A549 (cell line): ENCODE measurements at regions of chr7 and their contacts with region 1.

Region 1: GRCh38 chr7:116525913-116526861 is 1.4 kb downstream of the CAV1 start:
- DNase-seq: peak; percentile 83 to 90
- ATAC-seq: peak; percentile 72 to 82
- H3K4me3 ChIP-seq: peak overlapping the region; percentile 78
- H3K27ac ChIP-seq: peak overlapping the region; percentile 99
- H3K4me1 ChIP-seq: peaks cover 68% of the 10 kb centered on the region
- CTCF ChIP-seq: peak; percentile 86
- EP300 ChIP-seq: no peak
- POLR2A ChIP-seq: peak; percentile 30; the same call in 1 of the 2 replicates
- RAD21 ChIP-seq: peak; percentile 67 to 94

Region 2: GRCh38 chr7:116180302-116180701 is 345.9 kb before region 1 on chr7:
- CTCF ChIA-PET with region 1: interaction called, 10 read pairs
- POLR2A ChIA-PET with region 1: no interaction called
- DNase-seq: peak; percentile 36 to 62
- ATAC-seq: peak; percentile 84 to 88
- H3K4me3 ChIP-seq: no peak overlapping the region
- H3K27ac ChIP-seq: no peak overlapping the region
- H3K4me1 ChIP-seq: peaks cover 14% of the 10 kb centered on the region
- CTCF ChIP-seq: peak; percentile 91
- EP300 ChIP-seq: no peak
- POLR2A ChIP-seq: no peak
- RAD21 ChIP-seq: peak; percentile 89 to 94

Region 3: GRCh38 chr7:116271963-116272839 is 254.0 kb before region 1 on chr7:
- CTCF ChIA-PET with region 1: interaction called, 22 read pairs
- POLR2A ChIA-PET with region 1: interaction called, 28 read pairs
- DNase-seq: peak; percentile 84 to 93
- ATAC-seq: peak; percentile 89 to 97
- H3K4me3 ChIP-seq: peak overlapping the region; percentile 11; the same call in 1 of the 3 replicates
- H3K27ac ChIP-seq: peak overlapping the region; percentile 90
- H3K4me1 ChIP-seq: peaks cover 73% of the 10 kb centered on the region
- CTCF ChIP-seq: no peak
- EP300 ChIP-seq: peak; percentile 66 to 82; a peak in 2 of 5 replicates
- POLR2A ChIP-seq: no peak
- RAD21 ChIP-seq: peak in 1 of 2 experiments; percentile 38; a peak in 3 of 5 replicates

Region 4: DNA sequence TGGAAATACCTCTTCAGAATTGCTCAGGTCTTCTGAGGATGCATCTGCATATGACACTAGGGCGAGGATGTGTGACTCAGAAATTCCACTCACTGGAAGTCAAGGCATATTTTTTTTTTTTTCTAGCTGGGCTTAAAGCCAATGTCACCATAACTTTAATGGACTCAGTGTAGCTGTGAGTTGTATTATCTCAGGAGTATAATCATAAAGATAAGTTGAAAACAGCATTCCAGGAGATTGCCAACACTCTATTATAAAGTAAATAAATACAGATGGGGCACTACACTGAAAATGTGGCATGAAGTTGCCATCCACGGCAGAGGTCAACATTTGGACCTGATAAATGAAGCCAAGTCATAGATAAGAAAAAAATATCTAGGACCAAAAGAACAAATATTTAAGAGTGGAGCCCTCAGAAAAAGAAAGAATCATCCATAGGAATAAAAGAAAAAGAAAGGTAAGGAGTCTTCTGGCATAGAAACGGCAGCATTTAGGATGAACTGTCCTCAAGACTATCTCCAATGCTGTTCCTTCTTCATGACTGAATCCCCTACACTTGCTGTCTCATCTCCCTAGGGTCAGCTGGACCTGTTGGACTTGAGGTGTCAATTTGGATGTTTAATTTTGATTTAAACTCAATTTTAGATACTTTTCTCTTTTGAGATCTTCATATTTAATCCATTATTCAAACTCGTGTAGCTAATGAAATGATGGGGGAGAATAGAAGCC is 99.6 kb before region 1 on chr7:
- CTCF ChIA-PET with region 1: interaction called, 17 read pairs
- POLR2A ChIA-PET with region 1: interaction called, 3 read pairs
- DNase-seq: peak; percentile 57 to 92
- ATAC-seq: peak; percentile 85 to 89
- H3K4me3 ChIP-seq: 0 out of 3 replicates have a peak overlapping the region, but pooled peaks have one; percentile 5
- H3K27ac ChIP-seq: peak overlapping the region; percentile 75 to 86
- H3K4me1 ChIP-seq: peaks cover 60% of the 10 kb centered on the region
- CTCF ChIP-seq: no peak
- EP300 ChIP-seq: peak in 1 of 2 experiments; percentile 59; a peak in 1 of 5 replicates
- POLR2A ChIP-seq: no peak
- RAD21 ChIP-seq: peak; percentile 47 to 50; a peak in 4 of 5 replicates

Region 5: DNA sequence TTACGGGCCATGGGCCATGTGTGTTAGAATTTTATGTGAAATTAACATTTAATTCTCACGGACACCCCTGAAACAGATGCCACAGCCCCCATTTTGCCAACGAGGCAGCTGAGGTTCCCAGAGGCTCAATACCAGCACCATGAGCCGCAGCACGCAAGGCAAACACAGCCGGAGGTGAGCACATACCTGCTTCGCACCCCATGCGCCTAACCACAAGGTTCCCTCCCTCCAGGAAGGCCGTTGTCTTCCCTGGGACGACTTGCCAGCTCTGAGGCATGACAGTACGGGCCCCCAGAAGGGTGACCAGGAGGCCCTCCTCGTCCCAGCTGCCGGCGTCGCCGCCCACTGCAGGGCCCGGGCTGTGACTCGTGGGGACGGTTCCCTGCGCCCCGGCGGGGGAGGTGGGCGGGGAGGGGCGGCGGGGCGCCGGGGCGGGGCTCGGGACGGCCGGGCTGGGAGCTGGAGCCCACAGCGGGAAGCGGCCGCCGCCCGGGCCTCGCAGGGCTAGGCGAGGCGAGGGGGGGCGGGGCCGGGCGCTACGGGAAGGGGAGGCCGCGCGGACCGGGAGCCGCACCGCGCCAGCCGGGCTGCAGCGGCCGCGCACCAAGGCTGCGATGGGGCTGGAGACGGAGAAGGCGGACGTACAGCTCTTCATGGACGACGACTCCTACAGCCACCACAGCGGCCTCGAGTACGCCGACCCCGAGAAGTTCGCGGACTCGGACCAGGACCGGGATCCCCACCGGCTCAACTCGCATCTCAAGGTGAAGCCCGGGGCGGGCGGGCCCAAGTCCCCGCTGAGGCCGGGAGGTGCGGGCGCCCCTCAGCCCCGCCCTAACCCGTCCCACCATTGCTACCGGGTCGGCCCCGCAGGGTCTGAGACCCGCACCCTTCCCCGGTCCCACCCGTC is 26.8 kb before region 1 on chr7 and contains the start of gene CAV2:
- CTCF ChIA-PET with region 1: interaction called, 54 read pairs
- POLR2A ChIA-PET with region 1: interaction called, 50 read pairs
- DNase-seq: peak; percentile 61 to 82
- ATAC-seq: peak; percentile 82 to 84
- H3K4me3 ChIP-seq: peak within 1 kb of the TSS; percentile 71
- H3K27ac ChIP-seq: peak within 1 kb of the TSS; percentile 88 to 94
- H3K4me1 ChIP-seq: peaks cover 55% of the 10 kb centered on the region
- CTCF ChIP-seq: no peak
- EP300 ChIP-seq: no peak
- POLR2A ChIP-seq: peak; percentile 57
- RAD21 ChIP-seq: peak in 1 of 2 experiments; percentile 20; a peak in 4 of 5 replicates
- polyA plus RNA-seq, gene CAV2: 257 and 296 TPM in 2 replicates

Region 6: GRCh38 chr7:116576350-116577319 is 50.4 kb after region 1 on chr7:
- CTCF ChIA-PET with region 1: interaction called, 37 read pairs
- POLR2A ChIA-PET with region 1: interaction called, 5 read pairs
- DNase-seq: peak in 1 of 2 experiments; percentile 67
- ATAC-seq: peak; percentile 81 to 89
- H3K4me3 ChIP-seq: no peak overlapping the region
- H3K27ac ChIP-seq: peak overlapping the region; percentile 79 to 85
- H3K4me1 ChIP-seq: peaks cover 62% of the 10 kb centered on the region
- CTCF ChIP-seq: no peak
- EP300 ChIP-seq: peak in 1 of 2 experiments; percentile 38; a peak in 1 of 5 replicates
- POLR2A ChIP-seq: no peak
- RAD21 ChIP-seq: no peak; a peak in 2 of 5 replicates

Region 7: GRCh38 chr7:117127585-117128168 is 601.5 kb after region 1 on chr7:
- CTCF ChIA-PET with region 1: no interaction called
- POLR2A ChIA-PET with region 1: no interaction called
- DNase-seq: peak in 1 of 2 experiments; percentile 69
- ATAC-seq: peak; percentile 64 to 71; a peak in 4 of 6 replicates
- H3K4me3 ChIP-seq: no peak overlapping the region
- H3K27ac ChIP-seq: no peak overlapping the region; a peak in 1 of 6 replicates
- H3K4me1 ChIP-seq: peaks cover 74% of the 10 kb centered on the region
- CTCF ChIP-seq: peak; percentile 87
- EP300 ChIP-seq: no peak
- POLR2A ChIP-seq: no peak
- RAD21 ChIP-seq: peak; percentile 61 to 70